ENCODE measurements at regions of chr16 and their contacts with region 1.

Region 1: GRCh38 chr16:24499193-24499814 is 40.1 kb upstream of the RBBP6 start:
- DNase-seq: peak; percentile 38 to 49
- H3K4me3 ChIP-seq: no peak overlapping the region
- H3K4me3 Mint-ChIP-seq: no peak overlapping the region
- H3K27ac Mint-ChIP-seq: no peak overlapping the region
- H3K4me1 ChIP-seq: peaks cover 1% of the 10 kb centered on the region; the same call in 1 of the 2 replicates
- H3K4me1 Mint-ChIP-seq: no peaks in the 10 kb centered on the region
- H3K27me3 ChIP-seq: no peaks in the 10 kb centered on the region
- H3K27me3 Mint-ChIP-seq: peaks cover 10% of the 10 kb centered on the region
- CTCF ChIP-seq: peak; percentile 40 to 48

Region 2: DNA sequence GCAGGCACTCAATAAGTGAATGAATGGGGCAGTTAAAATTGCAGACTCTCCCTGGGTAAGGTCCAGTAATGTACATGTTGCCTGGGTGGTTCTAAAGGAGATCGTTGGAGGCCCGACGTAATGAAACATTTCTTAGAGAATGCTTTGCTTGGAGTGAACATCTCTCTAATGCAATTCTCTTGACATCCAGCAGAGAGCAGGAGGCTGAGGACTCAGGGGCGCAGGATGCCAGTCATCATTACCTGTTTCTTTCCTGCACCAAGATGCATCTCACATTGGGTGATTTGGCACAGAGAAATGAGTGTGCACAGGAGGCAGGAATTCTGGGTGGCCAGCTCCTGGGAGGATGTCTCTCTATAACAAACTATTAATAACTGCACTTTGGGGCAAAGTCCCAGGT is 90.3 kb before region 1 on chr16:
- CTCF ChIA-PET with region 1: interaction called, 4 read pairs
- POLR2A ChIA-PET with region 1: no interaction called
- intact Hi-C with region 1: loop called (anchors 1 kb)
- DNase-seq: peak in 1 of 2 experiments; percentile 7
- H3K4me3 ChIP-seq: no peak overlapping the region
- H3K4me3 Mint-ChIP-seq: no peak overlapping the region
- H3K27ac Mint-ChIP-seq: no peak overlapping the region
- H3K4me1 ChIP-seq: no peaks in the 10 kb centered on the region
- H3K4me1 Mint-ChIP-seq: no peaks in the 10 kb centered on the region
- H3K27me3 ChIP-seq: no peaks in the 10 kb centered on the region
- H3K27me3 Mint-ChIP-seq: no peaks in the 10 kb centered on the region
- CTCF ChIP-seq: peak in 1 of 2 experiments; percentile 31

Region 3: DNA sequence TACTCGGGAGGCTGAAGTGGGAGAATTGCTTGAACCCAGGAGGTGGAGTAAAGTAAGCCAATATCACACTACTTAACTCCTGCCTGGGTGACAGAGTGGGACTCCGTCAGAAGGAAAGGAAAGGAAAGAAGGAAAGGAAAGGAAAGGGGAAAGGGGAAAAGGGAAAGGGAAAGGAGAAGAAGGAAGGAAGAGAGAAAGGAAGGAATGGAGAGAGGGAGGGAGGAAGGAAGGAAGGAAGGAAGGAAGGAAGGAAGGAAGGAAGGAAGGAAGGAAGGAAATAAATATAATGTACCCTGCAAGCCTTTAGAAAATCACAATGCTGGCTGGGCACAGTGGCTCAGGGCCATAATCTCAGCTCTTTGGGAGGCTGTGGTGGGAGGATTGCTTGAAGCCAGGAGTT is 373.7 kb after region 1 on chr16:
- CTCF ChIA-PET with region 1: no interaction called
- POLR2A ChIA-PET with region 1: interaction called, 16 read pairs
- intact Hi-C with region 1: no loop called
- DNase-seq: no peak
- H3K4me3 ChIP-seq: no peak overlapping the region
- H3K4me3 Mint-ChIP-seq: no peak overlapping the region
- H3K27ac Mint-ChIP-seq: no peak overlapping the region
- H3K4me1 ChIP-seq: no peaks in the 10 kb centered on the region
- H3K4me1 Mint-ChIP-seq: no peaks in the 10 kb centered on the region
- H3K27me3 ChIP-seq: no peaks in the 10 kb centered on the region
- H3K27me3 Mint-ChIP-seq: no peaks in the 10 kb centered on the region
- CTCF ChIP-seq: no peak

Measured in Caco-2 (cell line).